AG04450 (cell line): ENCODE measurements at regions of chr7 and their contacts with region 1.

Region 1: GRCh38 chr7:100983451-100984187 is 14.3 kb downstream of the MUC12 start:
- DNase-seq: no peak
- H3K4me3 ChIP-seq: no peak overlapping the region
- H3K27ac ChIP-seq: no peak overlapping the region
- H3K27me3 ChIP-seq: peaks cover 2% of the 10 kb centered on the region
- CTCF ChIP-seq: no peak

Region 2: DNA sequence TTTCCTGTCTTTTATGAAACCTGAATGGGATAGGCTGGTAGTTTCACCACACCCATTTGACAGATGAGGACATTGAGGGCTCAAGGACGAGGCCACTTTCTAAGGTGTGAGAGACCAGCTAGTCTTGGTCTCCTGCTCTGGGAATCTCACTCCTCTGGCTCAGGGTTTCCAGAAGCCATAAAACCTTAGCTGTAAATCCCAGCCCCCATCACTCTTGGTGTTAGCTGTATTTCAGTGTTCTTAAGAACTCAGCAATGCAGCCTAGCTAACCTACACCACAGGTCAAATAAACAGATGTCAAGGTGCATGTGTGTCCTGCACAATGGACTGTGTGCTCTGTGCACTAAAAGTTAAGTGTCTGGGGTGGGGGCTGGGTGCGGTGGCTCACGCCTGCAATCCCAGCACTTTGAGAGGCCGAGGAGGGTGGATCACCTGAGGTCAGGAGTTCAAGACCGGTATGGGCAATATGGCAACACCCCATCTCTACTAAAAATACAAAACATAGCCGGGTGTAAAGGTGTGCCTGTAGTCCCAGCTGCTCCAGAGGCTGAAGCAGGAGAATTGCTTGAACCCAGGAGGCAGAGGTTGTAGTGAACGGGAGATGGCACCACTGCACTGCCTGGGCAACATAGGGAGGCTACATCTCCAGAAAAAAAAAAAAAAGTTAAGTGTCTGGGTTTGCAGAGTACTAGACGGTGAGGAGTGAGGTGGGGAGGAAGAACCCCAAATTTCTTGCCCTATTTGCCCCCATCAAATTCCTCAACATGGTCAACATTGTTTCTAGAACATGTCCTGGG is 263.9 kb before region 1 on chr7:
- CTCF ChIA-PET with region 1: interaction called, 10 read pairs
- POLR2A ChIA-PET with region 1: no interaction called
- DNase-seq: peak; percentile 11
- H3K4me3 ChIP-seq: no peak overlapping the region
- H3K27ac ChIP-seq: no peak overlapping the region
- H3K27me3 ChIP-seq: peaks cover 59% of the 10 kb centered on the region
- CTCF ChIP-seq: peak; percentile 49

Region 3: DNA sequence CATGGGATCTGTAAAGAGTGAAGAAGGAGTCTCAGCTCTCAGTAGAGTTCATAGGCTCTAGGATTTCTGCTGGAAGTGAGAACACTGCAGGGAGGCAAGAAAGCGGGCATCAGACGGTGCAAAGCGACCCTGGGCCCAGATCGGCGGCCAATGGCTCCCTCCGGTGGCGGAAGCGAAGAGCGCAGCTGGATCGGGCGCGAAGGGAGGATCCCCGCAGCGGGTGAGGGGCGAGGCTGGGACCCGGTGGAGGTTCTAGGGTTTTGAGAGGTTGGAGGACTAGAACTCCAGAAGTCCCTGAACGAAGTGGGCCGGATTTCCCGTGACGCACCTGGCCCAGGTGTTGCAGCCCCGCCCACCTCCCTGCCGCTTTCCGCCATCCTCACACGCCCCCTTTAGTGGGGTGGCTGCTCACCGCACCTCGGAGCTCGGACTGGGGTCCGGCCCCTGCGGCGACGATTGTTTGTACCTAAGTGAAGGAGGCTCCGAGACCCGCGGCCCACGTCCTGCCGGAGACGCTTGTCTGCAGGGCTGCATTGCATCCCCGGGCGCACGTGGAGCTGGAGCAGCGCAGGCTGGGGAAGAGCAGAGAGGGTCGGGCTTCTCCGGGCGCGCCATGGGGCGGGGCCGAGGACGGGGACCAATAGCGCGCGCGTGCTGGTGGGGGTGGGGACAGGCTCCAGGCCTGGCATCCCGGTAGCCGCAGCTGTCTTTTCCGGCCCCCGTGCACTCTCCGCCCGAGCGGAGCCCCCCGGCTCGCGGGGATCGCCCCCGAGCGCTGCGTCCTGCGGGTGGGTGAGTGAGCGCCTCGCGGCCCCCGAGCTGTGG is 131.4 kb before region 1 on chr7 and contains the start of gene SLC12A9:
- CTCF ChIA-PET with region 1: no interaction called
- POLR2A ChIA-PET with region 1: no interaction called
- DNase-seq: peak; percentile 73
- H3K4me3 ChIP-seq: peak within 1 kb of the TSS; percentile 83
- H3K27ac ChIP-seq: no peak within 1 kb of the TSS
- H3K27me3 ChIP-seq: no peaks in the 10 kb centered on the region
- CTCF ChIP-seq: peak; percentile 89
- polyA plus RNA-seq, gene SLC12A9: 10.8 and 11.2 TPM in 2 replicates